ENCODE measurements at regions of chr11 and their contacts with region 1.

Region 1: DNA sequence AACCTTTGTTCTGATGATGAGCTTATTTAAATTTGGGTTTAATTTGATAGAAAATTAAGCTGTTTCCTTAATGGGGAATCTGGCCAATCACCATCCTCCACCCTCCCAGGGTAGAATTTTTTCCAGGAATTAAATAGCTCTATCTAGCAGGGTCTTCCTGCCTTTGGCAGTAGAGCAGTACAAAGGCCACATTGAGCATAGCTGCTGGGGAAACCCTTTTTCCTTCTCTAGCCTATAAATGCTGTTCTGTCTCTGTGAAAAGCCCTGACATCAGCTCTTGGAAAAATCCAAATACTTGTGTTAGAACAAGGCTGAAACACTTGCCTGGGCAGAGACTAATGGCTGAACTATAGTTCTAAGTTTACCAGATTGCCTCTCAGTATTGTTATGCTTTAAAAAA is 55.1 kb downstream of the ARHGEF12 start:
- DNase-seq: no peak
- H3K4me3 ChIP-seq: no peak overlapping the region
- H3K27ac ChIP-seq: peak overlapping the region in 2 of 4 donors; percentile 5 to 37
- H3K4me1 ChIP-seq: peaks cover 32 to 39% (median 36%) of the 10 kb centered on the region in 4 donors
- H3K27me3 ChIP-seq: no peaks in the 10 kb centered on the region
- CTCF ChIP-seq: no peak
- EP300 ChIP-seq: no peak
- POLR2A ChIP-seq: no peak

Region 2: DNA sequence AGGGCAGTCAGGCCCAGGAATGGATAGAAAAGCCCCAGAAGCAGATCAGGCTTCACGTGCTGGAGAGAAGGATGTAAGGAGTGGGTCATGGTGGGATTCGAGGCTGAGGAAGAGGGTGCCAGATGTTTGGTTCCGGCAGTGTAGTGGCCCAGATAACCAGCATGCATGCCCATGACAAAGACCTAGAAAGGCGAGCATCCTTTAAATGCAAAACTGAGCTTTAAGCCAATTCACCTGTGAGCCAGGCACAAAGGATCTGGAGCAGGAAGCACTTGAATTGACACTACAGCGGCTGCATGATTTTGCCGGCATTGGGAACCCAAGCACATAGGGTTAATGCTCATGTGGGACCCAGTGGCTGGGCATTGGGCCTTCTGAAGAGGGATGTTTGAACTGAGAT is 438.9 kb before region 1 on chr11:
- intact Hi-C with region 1: no loop called
- DNase-seq: no peak
- H3K4me3 ChIP-seq: no peak overlapping the region
- H3K27ac ChIP-seq: no peak overlapping the region
- H3K4me1 ChIP-seq: no peaks in the 10 kb centered on the region
- H3K27me3 ChIP-seq: peaks cover 0 to 51% (median 0%) of the 10 kb centered on the region in 4 donors
- CTCF ChIP-seq: no peak
- EP300 ChIP-seq: no peak
- POLR2A ChIP-seq: no peak

Region 3: GRCh38 chr11:120344302-120345004 is 46.8 kb before region 1 on chr11:
- intact Hi-C with region 1: loop called (anchors 10 kb)
- DNase-seq: no peak
- H3K4me3 ChIP-seq: no peak overlapping the region
- H3K27ac ChIP-seq: no peak overlapping the region
- H3K4me1 ChIP-seq: peaks cover 89 to 96% (median 93%) of the 10 kb centered on the region in 4 donors
- H3K27me3 ChIP-seq: no peaks in the 10 kb centered on the region
- CTCF ChIP-seq: no peak
- EP300 ChIP-seq: no peak
- POLR2A ChIP-seq: no peak

Region 4: GRCh38 chr11:121300313-121300971 is 909.1 kb after region 1 on chr11:
- intact Hi-C with region 1: no loop called
- DNase-seq: no peak
- H3K4me3 ChIP-seq: no peak overlapping the region
- H3K27ac ChIP-seq: peak overlapping the region in 1 of 4 donors; percentile 3
- H3K4me1 ChIP-seq: peaks cover 7 to 25% (median 21%) of the 10 kb centered on the region in 4 donors
- H3K27me3 ChIP-seq: no peaks in the 10 kb centered on the region
- CTCF ChIP-seq: no peak
- EP300 ChIP-seq: no peak
- POLR2A ChIP-seq: no peak

Measured in esophagus muscularis mucosa (tissue), 4 donors.